ENCODE measurements at regions of chr11 and their contacts with region 1.

Region 1: GRCh38 chr11:125315077-125315740 is 150.7 kb downstream of the PKNOX2 start:
- DNase-seq: no peak
- H3K4me3 ChIP-seq: no peak overlapping the region
- H3K27ac ChIP-seq: no peak overlapping the region
- H3K4me1 ChIP-seq: peaks cover 0 to 23% (median 8%) of the 10 kb centered on the region in 4 experiments; a peak in 6 of 7 replicates
- H3K27me3 ChIP-seq: no peaks in the 10 kb centered on the region
- CTCF ChIP-seq: no peak
- EP300 ChIP-seq: no peak
- POLR2A ChIP-seq: no peak
- RAD21 ChIP-seq: no peak

Region 2: DNA sequence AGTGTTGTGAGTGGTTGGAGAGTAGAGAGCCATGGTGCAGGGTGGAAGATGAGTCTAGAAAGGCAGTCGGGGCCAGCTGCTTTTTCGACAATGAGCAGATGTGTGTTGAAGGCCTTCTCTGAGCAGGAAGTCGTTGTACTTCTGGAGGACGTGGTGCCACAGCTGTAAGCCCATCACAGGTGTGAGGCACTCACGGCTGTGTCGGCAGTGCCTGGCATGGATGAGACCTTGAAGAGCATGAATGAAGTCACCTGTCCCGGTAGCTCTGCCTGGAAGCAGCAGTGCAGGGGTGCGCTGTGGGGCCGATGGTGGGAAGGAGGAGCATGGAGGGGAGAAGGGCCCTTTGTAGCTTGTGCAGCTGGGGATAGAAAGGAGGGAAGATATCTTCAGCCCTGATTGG is 14.6 kb after region 1 on chr11:
- CTCF ChIA-PET with region 1: interaction called, 11 read pairs
- POLR2A ChIA-PET with region 1: no interaction called
- DNase-seq: no peak
- H3K4me3 ChIP-seq: no peak overlapping the region
- H3K27ac ChIP-seq: no peak overlapping the region
- H3K4me1 ChIP-seq: no peaks in the 10 kb centered on the region; a peak in 1 of 7 replicates
- H3K27me3 ChIP-seq: no peaks in the 10 kb centered on the region
- CTCF ChIP-seq: no peak
- EP300 ChIP-seq: no peak
- POLR2A ChIP-seq: no peak
- RAD21 ChIP-seq: no peak